ENCODE measurements at regions of chr20 and their contacts with region 1.

Region 1: GRCh38 chr20:32249030-32249738 is 28.3 kb upstream of the KIF3B start:
- DNase-seq: peak; percentile 60
- ATAC-seq: peak; percentile 67
- H3K4me3 Mint-ChIP-seq: peak overlapping the region; percentile 28
- H3K27ac Mint-ChIP-seq: peak overlapping the region; percentile 84
- H3K4me1 Mint-ChIP-seq: peaks cover 75% of the 10 kb centered on the region
- H3K27me3 Mint-ChIP-seq: no peaks in the 10 kb centered on the region

Region 2: DNA sequence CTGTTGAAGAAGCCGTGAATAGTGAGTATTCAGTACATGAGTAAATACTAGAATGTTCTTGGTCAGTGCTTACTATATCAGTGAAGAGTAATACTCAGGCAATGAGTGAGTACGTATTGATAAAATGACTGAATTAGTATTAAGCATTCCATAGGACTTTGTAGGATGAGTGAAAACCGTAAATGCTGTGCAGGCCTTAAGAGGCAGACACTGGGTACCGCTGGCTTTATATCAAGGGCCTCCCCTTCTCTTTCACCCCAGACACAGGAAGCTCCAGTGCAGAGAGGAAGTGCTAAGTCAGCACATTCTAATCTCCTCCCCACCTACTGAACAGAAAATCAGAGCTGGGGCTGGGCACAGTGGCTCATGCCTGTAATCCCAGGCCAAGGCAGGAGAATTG is 17.3 kb before region 1 on chr20:
- CTCF ChIA-PET with region 1: interaction called, 4 read pairs
- POLR2A ChIA-PET with region 1: interaction called, 3 read pairs
- intact Hi-C with region 1: loop called (anchors 1 kb)
- DNase-seq: peak; percentile 68
- ATAC-seq: peak; percentile 89
- H3K4me3 Mint-ChIP-seq: peak overlapping the region; percentile 52
- H3K27ac Mint-ChIP-seq: peak overlapping the region; percentile 98
- H3K4me1 Mint-ChIP-seq: peaks cover 42% of the 10 kb centered on the region
- H3K27me3 Mint-ChIP-seq: no peaks in the 10 kb centered on the region

Region 3: DNA sequence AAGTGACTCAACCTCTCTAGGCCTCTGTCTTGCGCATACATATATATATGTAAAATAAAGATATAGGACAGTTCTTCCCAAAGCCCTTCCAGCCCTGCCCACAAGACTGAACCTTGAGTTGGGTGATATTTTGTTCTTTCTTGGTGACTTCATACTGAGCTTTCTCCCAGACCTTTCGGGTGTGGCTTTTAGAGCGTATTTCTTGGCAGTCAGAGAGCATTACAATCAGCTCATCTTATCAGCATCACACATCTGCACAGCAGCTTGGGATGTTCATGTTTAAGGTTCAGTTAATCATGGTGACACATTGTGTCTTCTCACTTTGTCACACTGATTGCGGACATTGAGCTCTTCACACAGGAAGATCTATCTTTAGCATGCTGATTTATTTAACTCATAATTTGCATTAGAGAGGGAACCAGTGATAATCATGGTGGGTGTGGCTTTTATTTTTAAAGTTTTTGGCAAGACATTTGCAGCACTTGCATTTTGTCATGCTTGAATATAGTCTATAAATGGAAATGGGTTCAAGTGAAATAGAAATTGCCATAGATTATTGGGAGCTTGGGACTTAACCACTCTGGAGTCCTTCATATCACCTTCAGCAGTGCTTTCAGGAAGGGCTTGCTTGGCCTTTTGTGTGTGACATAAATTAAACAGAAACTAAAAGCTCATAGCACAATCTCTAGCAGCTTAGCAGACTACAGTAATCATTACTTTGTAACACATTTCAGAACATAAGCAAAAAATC is 36.6 kb after region 1 on chr20:
- CTCF ChIA-PET with region 1: interaction called, 11 read pairs
- POLR2A ChIA-PET with region 1: interaction called, 30 read pairs
- intact Hi-C with region 1: loop called (anchors 1 kb)
- DNase-seq: peak; percentile 70
- ATAC-seq: peak; percentile 83
- H3K4me3 Mint-ChIP-seq: peak overlapping the region; percentile 58
- H3K27ac Mint-ChIP-seq: peak overlapping the region; percentile 97
- H3K4me1 Mint-ChIP-seq: peaks cover 88% of the 10 kb centered on the region
- H3K27me3 Mint-ChIP-seq: no peaks in the 10 kb centered on the region

Region 4: DNA sequence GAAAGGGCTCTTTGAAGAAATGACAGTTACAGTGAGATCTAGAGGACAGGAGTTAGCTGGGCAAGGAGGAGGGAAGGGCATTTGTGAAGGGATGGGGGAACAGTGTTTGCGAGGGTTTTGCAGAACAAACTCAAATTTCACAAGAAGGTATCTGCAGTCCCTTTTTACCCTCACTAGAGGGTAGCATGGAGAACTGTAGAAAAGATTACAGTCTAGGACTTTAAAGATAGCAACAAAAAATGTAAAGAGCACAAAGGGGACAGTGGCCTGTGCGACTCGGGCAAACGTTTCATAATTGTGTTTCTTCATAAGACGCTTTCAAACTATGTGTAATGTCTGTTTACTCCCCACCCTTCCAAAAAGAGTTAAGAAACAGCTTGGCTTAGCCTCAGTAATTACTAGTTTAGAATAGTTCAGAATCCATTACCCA is 87.7 kb after region 1 on chr20:
- CTCF ChIA-PET with region 1: no interaction called
- POLR2A ChIA-PET with region 1: no interaction called
- intact Hi-C with region 1: loop called (anchors 1 to 2 kb)
- DNase-seq: no peak
- ATAC-seq: no peak
- H3K4me3 Mint-ChIP-seq: no peak overlapping the region
- H3K27ac Mint-ChIP-seq: no peak overlapping the region
- H3K4me1 Mint-ChIP-seq: peaks cover 41% of the 10 kb centered on the region
- H3K27me3 Mint-ChIP-seq: no peaks in the 10 kb centered on the region

Region 5: DNA sequence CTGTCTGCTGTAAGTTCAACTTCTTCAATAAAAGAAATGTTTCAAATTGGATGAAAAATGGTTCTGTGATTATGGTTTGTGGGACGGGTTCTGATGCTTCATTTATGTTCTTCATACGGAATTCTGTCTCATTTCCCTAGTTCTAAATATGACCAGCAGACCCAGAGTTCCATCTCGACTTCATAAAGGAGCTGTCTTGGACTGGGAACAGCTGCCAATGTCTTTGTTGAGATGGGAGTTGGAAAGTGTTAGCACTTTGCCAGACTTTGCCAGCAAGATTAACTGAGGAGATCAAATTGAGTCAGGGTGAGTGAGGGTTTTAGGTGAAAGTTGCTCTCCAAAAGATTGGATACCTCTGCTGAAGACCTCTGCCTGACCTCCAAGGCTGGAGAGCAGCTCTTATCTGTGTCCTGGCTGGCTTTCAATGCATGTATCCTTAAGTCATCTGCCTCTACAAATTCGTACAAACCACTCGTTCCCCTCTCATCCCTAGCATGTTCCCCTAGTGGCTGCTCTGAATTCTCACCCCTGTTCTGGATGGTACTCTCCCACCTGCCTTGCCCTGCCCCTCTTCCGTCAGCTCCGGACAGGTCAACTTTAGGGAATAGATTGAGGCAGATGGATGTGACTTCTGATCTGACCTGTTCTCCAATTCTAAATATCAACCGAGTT is 609.7 kb after region 1 on chr20 and contains the start of gene EFCAB8:
- CTCF ChIA-PET with region 1: no interaction called
- POLR2A ChIA-PET with region 1: interaction called, 11 read pairs
- intact Hi-C with region 1: no loop called
- DNase-seq: no peak
- ATAC-seq: no peak
- H3K4me3 Mint-ChIP-seq: no peak within 1 kb of the TSS
- H3K27ac Mint-ChIP-seq: peak within 1 kb of the TSS; percentile 63
- H3K4me1 Mint-ChIP-seq: peaks cover 20% of the 10 kb centered on the region
- H3K27me3 Mint-ChIP-seq: no peaks in the 10 kb centered on the region
- total RNA-seq, gene EFCAB8: 0.37 to 0.40 TPM

Measured in activated CD4-positive, alpha-beta T cell treated with anti-CD3 and anti-CD28 coated beads for 36 hours (primary cell).